Activated CD4-positive, alpha-beta T cell treated with anti-CD3 and anti-CD28 coated beads, Interleukin-2, amount 10 ng/mL, durations not matched to agents 7 days and 5 days (primary cell): ENCODE measurements at regions of chr3 and their contacts with region 1.

Region 1: DNA sequence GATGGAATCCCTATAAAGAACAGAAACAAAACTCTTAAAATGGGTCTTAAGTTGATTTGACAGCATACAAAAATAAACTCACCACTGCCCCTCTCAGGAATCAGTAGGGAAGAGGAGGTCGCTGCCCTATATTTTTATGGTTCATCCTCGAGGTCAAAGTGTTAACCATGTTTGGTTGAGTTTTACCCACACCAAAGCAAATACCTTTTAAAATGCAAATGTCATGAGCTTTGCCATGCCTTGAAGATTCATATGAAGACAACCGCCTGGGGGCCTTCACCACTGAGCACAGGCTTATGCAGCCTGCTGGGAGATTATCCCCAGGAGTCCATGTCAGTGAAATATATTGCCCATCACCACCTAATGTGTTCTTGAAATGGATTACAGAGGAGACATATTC is 66.1 kb downstream of the GLB1 start:
- DNase-seq: peak; percentile 63
- H3K4me3 Mint-ChIP-seq: no peak overlapping the region
- H3K27ac Mint-ChIP-seq: no peak overlapping the region
- H3K4me1 Mint-ChIP-seq: peaks cover 34% of the 10 kb centered on the region
- H3K27me3 Mint-ChIP-seq: no peaks in the 10 kb centered on the region

Region 2: DNA sequence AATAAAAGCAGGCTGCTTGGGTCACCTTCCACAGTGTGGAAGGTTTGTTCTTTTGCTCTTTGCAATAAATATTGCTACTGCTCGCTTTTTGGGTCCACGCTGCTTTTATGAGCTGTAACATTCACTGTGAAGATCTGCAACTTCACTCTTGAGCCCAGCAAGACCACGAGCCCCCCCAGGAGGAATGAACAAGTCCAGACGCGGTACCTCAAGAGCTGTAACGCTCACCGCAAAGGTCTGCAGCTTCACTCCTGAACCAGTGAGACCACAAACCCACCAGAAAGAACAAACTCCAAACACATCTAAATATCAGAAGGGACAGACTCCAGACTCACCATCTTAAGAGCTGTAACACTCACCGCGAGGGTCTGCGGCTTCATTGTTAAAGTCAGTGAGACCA is 126.8 kb before region 1 on chr3:
- CTCF ChIA-PET with region 1: no interaction called
- POLR2A ChIA-PET with region 1: no interaction called
- DNase-seq: no peak
- H3K4me3 Mint-ChIP-seq: no peak overlapping the region
- H3K27ac Mint-ChIP-seq: no peak overlapping the region
- H3K4me1 Mint-ChIP-seq: peaks cover 7% of the 10 kb centered on the region
- H3K27me3 Mint-ChIP-seq: peaks cover 17% of the 10 kb centered on the region

Region 3: DNA sequence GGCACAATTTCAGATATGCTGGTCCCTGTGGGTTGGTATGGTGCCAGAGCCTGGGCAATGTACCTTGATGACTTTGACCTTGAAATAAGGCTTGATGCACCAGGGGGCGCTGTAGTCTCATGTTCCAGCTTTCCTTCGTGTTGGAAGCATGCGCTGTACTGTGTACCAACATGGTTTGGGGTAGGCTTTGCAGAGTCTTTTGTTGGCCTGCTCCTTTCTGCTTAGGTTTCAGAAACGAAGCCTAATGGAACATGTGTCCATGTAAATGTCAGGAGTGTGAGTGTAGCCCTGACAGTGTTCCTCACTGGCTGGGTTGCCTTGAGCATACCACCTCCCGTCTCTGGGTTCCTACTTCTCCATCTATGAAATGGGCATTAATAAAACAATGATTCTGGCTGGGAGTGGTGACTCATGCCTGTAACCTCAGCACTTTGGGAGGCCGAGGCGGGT is 83.0 kb before region 1 on chr3:
- CTCF ChIA-PET with region 1: interaction called, 16 read pairs
- POLR2A ChIA-PET with region 1: no interaction called
- DNase-seq: peak; percentile 95
- H3K4me3 Mint-ChIP-seq: no peak overlapping the region
- H3K27ac Mint-ChIP-seq: no peak overlapping the region
- H3K4me1 Mint-ChIP-seq: peaks cover 46% of the 10 kb centered on the region
- H3K27me3 Mint-ChIP-seq: no peaks in the 10 kb centered on the region

Region 4: DNA sequence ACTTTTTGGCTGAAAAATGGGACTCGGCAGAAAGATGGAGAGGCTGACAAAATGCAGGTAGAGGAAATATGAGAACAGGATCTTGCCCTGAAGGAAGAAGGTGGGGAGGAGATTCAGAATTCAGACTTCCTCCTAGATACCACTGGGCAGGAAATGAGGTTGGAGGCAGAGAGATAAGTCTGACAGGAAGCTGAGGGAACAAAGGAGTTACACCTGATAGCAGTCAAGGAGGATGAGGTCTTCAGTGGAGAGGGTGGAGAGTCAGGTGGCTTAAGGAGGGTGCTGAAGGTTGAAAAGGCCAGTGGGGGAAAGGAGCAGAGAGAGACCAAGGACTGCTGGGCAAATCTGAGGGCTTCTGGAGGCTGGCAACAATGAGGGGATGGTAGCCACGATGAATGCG is 22.5 kb before region 1 on chr3:
- CTCF ChIA-PET with region 1: interaction called, 11 read pairs
- POLR2A ChIA-PET with region 1: no interaction called
- DNase-seq: peak; percentile 39
- H3K4me3 Mint-ChIP-seq: peak overlapping the region; percentile 24
- H3K27ac Mint-ChIP-seq: peak overlapping the region; percentile 80
- H3K4me1 Mint-ChIP-seq: peaks cover 35% of the 10 kb centered on the region
- H3K27me3 Mint-ChIP-seq: no peaks in the 10 kb centered on the region

Region 5: GRCh38 chr3:33041909-33042308 is 11.1 kb after region 1 on chr3:
- CTCF ChIA-PET with region 1: interaction called, 21 read pairs
- POLR2A ChIA-PET with region 1: no interaction called
- DNase-seq: no peak
- H3K4me3 Mint-ChIP-seq: no peak overlapping the region
- H3K27ac Mint-ChIP-seq: no peak overlapping the region
- H3K4me1 Mint-ChIP-seq: peaks cover 63% of the 10 kb centered on the region
- H3K27me3 Mint-ChIP-seq: no peaks in the 10 kb centered on the region

Region 6: DNA sequence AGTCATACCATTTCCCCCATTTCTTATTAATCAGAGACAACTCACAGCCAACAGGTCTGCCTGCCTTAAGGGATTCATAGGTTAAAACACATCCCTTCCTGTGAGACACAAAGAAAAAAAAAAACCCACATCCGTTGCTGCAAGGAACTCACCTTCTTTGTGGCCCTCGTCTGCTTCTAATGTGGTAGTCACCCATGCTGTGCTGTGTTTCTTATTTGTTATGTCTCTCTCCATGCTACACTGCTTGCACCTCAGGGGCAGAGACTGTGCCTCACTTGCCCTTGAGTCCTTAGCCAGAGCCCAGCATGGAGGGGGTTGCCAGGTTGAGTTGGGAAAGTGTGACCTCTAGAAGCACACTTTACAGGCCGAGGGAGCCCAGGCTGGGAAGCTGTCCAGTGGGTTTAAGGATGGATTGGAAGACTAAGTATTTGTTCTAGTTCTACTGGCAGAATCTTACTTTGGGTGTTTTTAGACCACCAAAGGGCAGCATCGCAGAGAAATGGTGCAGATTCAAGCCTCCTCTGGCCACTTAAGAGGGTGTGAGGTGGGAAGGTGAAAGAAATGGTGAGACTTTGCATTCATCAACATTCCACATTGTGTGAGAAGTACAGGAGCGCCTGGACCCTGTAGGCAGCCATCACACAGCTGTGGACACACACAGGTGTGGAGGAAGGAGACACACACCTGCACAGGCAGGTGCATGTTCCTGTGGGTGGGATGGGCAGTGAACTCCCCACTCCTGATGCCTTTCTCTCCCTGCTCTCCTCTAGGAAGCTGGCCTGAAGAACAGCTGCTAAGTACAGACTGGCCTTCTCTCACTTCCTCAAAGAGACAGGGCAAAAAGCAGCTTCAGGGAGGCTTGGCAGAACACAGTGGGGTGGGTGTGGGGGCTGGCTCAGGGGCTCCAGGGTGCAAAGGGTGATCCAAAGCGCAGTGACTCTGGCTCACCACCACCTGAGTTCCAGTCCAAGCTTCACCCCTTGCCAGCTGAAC is 17.3 kb after region 1 on chr3:
- CTCF ChIA-PET with region 1: interaction called, 21 read pairs
- POLR2A ChIA-PET with region 1: no interaction called
- DNase-seq: peak; percentile 82
- H3K4me3 Mint-ChIP-seq: peak overlapping the region; percentile 70
- H3K27ac Mint-ChIP-seq: peak overlapping the region; percentile 94
- H3K4me1 Mint-ChIP-seq: peaks cover 82% of the 10 kb centered on the region
- H3K27me3 Mint-ChIP-seq: no peaks in the 10 kb centered on the region

Region 7: GRCh38 chr3:33287672-33288282 is 257.0 kb after region 1 on chr3:
- CTCF ChIA-PET with region 1: no interaction called
- POLR2A ChIA-PET with region 1: no interaction called
- DNase-seq: no peak
- H3K4me3 Mint-ChIP-seq: no peak overlapping the region
- H3K27ac Mint-ChIP-seq: no peak overlapping the region
- H3K4me1 Mint-ChIP-seq: no peaks in the 10 kb centered on the region
- H3K27me3 Mint-ChIP-seq: peaks cover 26% of the 10 kb centered on the region